Sigmoid colon (tissue), 7 donors: ENCODE measurements at regions of chr2 and their contacts with region 1.

Region 1: DNA sequence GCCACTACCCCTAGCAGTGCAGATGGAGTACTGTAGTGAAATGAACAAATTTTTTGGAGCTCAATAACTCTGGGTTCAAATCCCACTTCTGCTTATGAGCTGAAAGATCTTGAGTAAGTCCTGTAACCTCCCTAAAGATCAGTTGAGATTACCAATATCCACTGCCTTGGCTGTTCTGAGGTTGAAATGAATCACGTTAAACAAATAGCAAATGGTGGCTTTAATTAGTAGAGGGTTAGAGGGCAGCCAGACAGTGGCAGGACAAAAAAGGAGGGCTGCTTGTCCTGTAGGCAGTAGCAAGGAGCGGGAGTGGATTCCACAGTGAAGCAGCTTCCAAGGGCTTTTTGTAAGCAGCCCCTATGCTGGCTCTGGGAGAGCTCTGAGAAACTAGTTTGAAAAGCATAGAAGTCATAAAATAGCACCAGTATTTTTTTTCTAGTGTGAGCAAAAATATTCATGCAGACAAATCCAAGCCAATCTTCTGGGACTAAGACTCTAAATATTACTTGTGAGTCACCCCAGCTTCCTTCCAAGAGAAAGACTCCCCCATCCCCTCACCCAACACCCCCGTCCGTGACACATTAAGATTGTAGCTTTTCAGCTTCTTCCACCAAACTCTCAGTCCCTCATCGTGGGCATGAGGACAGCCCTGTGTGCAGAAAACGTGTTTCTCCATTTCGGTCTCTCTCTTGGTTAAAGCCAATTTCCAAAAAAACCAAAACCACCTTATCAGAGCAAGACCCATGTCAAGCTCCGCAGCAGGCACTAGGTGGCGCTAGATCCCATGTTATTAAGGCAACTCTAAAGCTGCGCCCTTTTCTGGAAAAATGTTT is 123.5 kb upstream of the LGALSL start:
- DNase-seq: peak; percentile 91
- H3K4me3 ChIP-seq: peak overlapping the region in 2 of 4 donors; percentile 29 to 37
- H3K27ac ChIP-seq: peak overlapping the region; percentile 60 to 79 (median 62)
- H3K4me1 ChIP-seq: peaks cover 0 to 32% (median 20%) of the 10 kb centered on the region in 4 donors
- H3K27me3 ChIP-seq: no peaks in the 10 kb centered on the region
- CTCF ChIP-seq: peak; percentile 87 to 91 (median 90)
- EP300 ChIP-seq: no peak
- POLR2A ChIP-seq: no peak

Region 2: DNA sequence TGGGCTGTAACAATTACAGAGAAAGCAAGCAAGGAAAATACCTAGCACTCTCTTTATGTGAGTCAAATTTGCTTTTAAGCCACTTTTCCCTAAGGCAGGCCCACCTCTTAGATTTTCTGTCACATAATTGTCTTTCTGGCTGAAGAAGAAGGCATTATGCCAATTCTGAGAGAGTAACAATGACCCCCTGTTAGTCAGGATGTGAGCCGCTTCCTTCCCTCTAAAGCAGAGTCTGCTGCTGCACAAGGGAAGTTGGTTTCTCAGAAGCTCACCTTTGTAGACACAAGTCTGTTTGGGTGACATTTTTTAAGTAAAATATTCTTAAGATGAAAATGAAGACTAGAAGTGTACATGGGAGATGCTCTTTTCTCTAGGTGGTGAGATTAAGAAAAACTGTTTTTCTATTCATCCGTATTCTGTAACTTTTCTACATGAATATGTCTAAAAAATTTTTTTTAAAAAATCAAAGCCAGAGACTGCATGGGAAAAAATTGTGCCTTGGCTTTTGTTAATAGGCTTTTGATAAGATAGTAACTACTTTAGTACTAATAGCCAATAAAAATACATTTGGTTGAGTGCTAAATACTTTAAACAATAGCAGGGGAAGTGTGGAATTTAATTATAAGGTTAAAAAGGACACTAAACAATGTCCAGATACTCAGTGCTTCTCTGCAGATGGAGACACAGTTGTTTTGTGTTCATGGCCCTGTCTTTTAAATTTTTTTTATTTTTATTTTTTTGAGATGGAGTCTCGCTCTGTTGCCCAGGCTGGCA is 277.8 kb before region 1 on chr2:
- intact Hi-C with region 1: loop called (anchors 1 kb)
- DNase-seq: no peak
- H3K4me3 ChIP-seq: no peak overlapping the region
- H3K27ac ChIP-seq: peak overlapping the region in 1 of 4 donors; percentile 14
- H3K4me1 ChIP-seq: no peaks in the 10 kb centered on the region
- H3K27me3 ChIP-seq: no peaks in the 10 kb centered on the region
- CTCF ChIP-seq: no peak
- EP300 ChIP-seq: no peak
- POLR2A ChIP-seq: no peak

Region 3: GRCh38 chr2:64234785-64235184 is 95.7 kb before region 1 on chr2:
- intact Hi-C with region 1: loop called (anchors 5 kb)
- DNase-seq: no peak
- H3K4me3 ChIP-seq: no peak overlapping the region
- H3K27ac ChIP-seq: no peak overlapping the region
- H3K4me1 ChIP-seq: peaks cover 0 to 17% (median 10%) of the 10 kb centered on the region in 4 donors
- H3K27me3 ChIP-seq: no peaks in the 10 kb centered on the region
- CTCF ChIP-seq: no peak
- EP300 ChIP-seq: no peak
- POLR2A ChIP-seq: no peak

Region 4: DNA sequence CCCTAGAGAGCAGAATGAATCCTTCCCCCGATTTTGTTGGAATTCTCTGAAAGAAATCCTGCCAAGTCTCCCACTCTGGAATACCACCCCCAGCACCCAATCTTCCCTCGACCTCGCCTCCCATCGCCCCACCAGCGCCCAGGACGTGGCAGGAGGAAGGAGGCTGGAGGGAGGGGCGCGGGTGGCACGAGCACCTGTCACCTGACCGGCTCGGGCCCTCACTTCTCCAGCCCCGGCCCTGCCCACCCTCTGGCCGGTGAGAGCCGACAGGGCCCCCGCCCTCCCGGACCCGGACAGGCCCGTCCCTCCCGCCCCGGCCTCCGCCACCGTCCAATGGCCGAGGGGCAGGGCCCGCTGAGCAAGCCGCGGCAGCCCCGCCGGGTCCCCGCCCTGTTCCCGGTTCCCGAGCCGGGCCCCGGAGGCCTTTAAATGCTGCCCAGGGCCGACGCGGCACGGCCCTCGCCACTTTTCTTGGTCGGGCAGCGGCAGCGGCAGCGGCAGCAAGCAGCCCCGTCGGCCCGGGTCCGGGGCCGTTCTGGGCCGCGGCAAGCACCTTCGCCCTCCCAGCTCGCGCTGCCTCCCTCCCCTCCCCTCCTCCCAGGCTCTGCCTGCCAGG is 123.4 kb after region 1 on chr2 and contains the start of gene LGALSL:
- intact Hi-C with region 1: loop called (anchors 1 kb)
- DNase-seq: peak; percentile 86
- H3K4me3 ChIP-seq: peak within 1 kb of the TSS; percentile 58 to 92 (median 90)
- H3K27ac ChIP-seq: peak within 1 kb of the TSS; percentile 94 to 98 (median 97)
- H3K4me1 ChIP-seq: peaks cover 0 to 21% (median 15%) of the 10 kb centered on the region in 4 donors
- H3K27me3 ChIP-seq: no peaks in the 10 kb centered on the region
- CTCF ChIP-seq: no peak
- EP300 ChIP-seq: no peak
- POLR2A ChIP-seq: peak; percentile 36 to 37
- total RNA-seq, gene LGALSL: 7.1 to 10.4 (median 9.0) TPM

Region 5: DNA sequence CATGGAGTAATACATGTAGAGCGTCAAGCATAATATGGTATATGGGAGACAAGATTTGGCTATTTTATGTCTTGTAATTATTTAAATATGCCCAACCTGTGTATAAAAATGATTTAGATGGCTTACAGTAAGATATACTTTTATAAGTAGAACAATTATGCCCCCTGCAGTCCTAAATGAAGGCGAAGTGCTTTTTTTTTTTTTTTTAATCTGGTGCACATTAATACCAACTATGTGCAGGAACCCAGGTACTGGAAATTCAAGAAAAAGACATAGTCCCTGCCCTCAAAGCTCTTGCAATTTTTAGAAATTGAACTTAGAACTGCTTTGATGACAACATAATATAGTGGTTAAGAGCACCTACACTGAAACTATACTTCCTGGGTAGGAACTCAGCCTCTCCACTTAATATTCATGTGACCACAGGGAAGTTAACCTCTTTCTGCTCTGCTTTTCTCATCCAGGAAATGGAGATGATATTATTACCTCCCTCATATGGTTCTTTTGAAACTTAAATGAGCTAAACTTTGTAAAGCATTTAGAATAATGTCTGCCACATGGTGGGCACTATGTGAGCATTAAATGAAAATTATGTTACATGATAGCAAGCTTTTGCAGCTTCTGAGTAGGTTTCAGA is 231.8 kb after region 1 on chr2:
- intact Hi-C with region 1: loop called (anchors 5 kb)
- DNase-seq: no peak
- H3K4me3 ChIP-seq: no peak overlapping the region
- H3K27ac ChIP-seq: no peak overlapping the region
- H3K4me1 ChIP-seq: peaks cover 0 to 11% (median 0%) of the 10 kb centered on the region in 4 donors
- H3K27me3 ChIP-seq: no peaks in the 10 kb centered on the region
- CTCF ChIP-seq: peak in 1 of 4 experiments; percentile 43
- EP300 ChIP-seq: no peak
- POLR2A ChIP-seq: no peak